ENCODE measurements at regions of chr1 and their contacts with region 1.

Region 1: GRCh38 chr1:36223993-36224536 is at the start of gene THRAP3:
- DNase-seq: peak; percentile 98 to 100
- H3K4me3 ChIP-seq: peak within 1 kb of the TSS; percentile 78 to 87
- H3K27ac ChIP-seq: peak within 1 kb of the TSS; percentile 97 to 98
- H3K4me1 ChIP-seq: peaks cover 9 to 38% of the 10 kb centered on the region in 2 donors
- H3K27me3 ChIP-seq: no peaks in the 10 kb centered on the region
- CTCF ChIP-seq: no peak
- total RNA-seq, gene THRAP3: 39.5 TPM

Region 2: DNA sequence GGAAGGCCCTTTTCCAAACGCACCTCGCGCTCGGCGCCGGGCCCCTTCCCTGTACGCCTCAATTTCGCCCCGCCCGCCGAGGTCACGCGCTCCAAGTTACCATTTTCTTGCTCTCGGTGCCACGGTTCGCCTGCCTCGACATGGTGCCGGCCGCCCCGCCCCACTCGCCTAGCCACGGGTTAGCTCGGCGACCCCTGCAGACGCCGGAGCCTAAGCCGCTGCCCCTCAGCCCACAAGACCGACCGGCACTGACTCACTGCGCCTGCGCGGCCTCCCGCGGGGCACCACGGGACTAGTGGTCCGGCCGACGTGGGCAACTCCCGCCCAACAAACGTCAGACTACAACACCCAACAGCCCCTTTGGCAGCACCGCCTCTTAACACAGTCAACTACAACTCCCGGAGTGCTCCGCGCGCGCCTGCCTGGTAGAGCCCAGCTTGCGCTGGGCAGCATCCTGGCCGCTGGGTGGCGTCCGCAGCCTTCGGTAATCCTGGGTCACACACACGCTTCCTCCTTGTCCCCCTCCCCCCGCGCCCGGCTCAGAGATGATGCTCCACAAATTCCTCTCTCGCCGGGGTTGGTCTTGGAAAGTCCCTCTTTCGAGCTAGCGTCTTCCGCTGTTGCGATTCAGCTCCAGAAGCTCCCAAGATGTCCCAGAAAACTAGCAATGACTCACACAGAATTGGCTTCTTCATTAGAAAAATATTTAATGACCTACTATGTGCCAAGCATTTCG is 74.7 kb before region 1 on chr1 and contains the start of gene TRAPPC3:
- intact Hi-C with region 1: loop called (anchors 1 kb)
- DNase-seq: peak; percentile 100
- H3K4me3 ChIP-seq: peak within 1 kb of the TSS; percentile 71 to 77
- H3K27ac ChIP-seq: peak within 1 kb of the TSS; percentile 93 to 98
- H3K4me1 ChIP-seq: peaks cover 26 to 36% of the 10 kb centered on the region in 2 donors
- H3K27me3 ChIP-seq: no peaks in the 10 kb centered on the region
- CTCF ChIP-seq: peak; percentile 88 to 98 (median 95)
- total RNA-seq, gene TRAPPC3: 52.0 TPM

Region 3: DNA sequence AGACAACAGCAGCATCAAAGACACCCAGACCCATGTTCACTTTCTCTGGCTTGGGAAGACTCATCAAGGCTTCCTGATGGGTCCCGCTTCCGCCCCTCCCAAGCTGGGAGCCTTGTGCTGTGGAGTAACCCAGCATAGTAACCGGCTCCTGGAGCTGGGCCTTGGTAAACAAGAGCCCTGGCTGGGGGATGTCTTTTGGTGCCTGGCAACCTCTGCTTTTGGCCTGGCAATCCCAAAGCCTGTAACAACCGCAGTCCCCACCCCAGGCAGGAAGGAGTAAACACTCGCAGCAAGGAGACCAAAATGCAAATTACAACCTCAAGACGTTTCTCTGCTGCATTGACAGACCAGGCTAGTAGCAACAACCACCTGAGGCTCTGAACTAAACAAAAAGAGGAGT is 16.7 kb before region 1 on chr1:
- intact Hi-C with region 1: loop called (anchors 1 kb)
- DNase-seq: peak; percentile 21 to 91
- H3K4me3 ChIP-seq: peak overlapping the region in 1 of 2 donors; percentile 50
- H3K27ac ChIP-seq: peak overlapping the region; percentile 8 to 65
- H3K4me1 ChIP-seq: peaks cover 11 to 34% of the 10 kb centered on the region in 2 donors
- H3K27me3 ChIP-seq: no peaks in the 10 kb centered on the region
- CTCF ChIP-seq: no peak

Region 4: GRCh38 chr1:36248250-36248894 is 24.3 kb after region 1 on chr1:
- intact Hi-C with region 1: loop called (anchors 1 kb)
- DNase-seq: peak; percentile 66 to 90
- H3K4me3 ChIP-seq: no peak overlapping the region
- H3K27ac ChIP-seq: peak overlapping the region; percentile 87 to 92
- H3K4me1 ChIP-seq: peaks cover 16 to 58% of the 10 kb centered on the region in 2 donors
- H3K27me3 ChIP-seq: no peaks in the 10 kb centered on the region
- CTCF ChIP-seq: no peak

Region 5: GRCh38 chr1:36285448-36286101 is 61.5 kb after region 1 on chr1:
- intact Hi-C with region 1: loop called (anchors 5 kb)
- DNase-seq: peak in 1 of 2 donors; percentile 86
- H3K4me3 ChIP-seq: no peak overlapping the region
- H3K27ac ChIP-seq: peak overlapping the region in 1 of 2 donors; percentile 20
- H3K4me1 ChIP-seq: peaks cover 3 to 4% of the 10 kb centered on the region in 2 donors
- H3K27me3 ChIP-seq: no peaks in the 10 kb centered on the region
- CTCF ChIP-seq: peak; percentile 63 to 71 (median 70)

Measured in ascending aorta (tissue), 2 donors.